K562 (cell line): ENCODE measurements at regions of chr15 and their contacts with region 1.

Region 1: GRCh38 chr15:50765195-50765973 is at the start of gene SPPL2A:
- DNase-seq: peak; percentile 94 to 97 (median 96)
- ATAC-seq: peak; percentile 96
- H3K4me3 ChIP-seq: peak within 1 kb of the TSS; percentile 81
- H3K27ac ChIP-seq: peak within 1 kb of the TSS; percentile 93
- H3K4me1 ChIP-seq: peaks cover 8 to 14% of the 10 kb centered on the region in 2 experiments; a peak in 4 of 5 replicates
- H3K27me3 ChIP-seq: no peaks in the 10 kb centered on the region
- CTCF ChIP-seq: no peak
- EP300 ChIP-seq: peak; percentile 39; the same call in 1 of the 2 replicates
- POLR2A ChIP-seq: peak; percentile 94
- RAD21 ChIP-seq: 0 out of 4 replicates have a peak, but pooled peaks of 1 of the 2 experiments have one; percentile 8
- polyA plus RNA-seq, gene SPPL2A: 9.8 to 14.7 TPM

Region 2: GRCh38 chr15:50686468-50687301 is 78.7 kb before region 1 on chr15 and contains the start of gene TRPM7:
- CTCF ChIA-PET with region 1: no interaction called
- POLR2A ChIA-PET with region 1: interaction called, 3 read pairs
- in situ Hi-C with region 1: no loop called
- intact Hi-C with region 1: loop called (anchors 2 kb)
- DNase-seq: peak; percentile 88 to 95 (median 90)
- ATAC-seq: peak; percentile 87
- H3K4me3 ChIP-seq: peak within 1 kb of the TSS; percentile 82
- H3K27ac ChIP-seq: peak within 1 kb of the TSS; percentile 97
- H3K4me1 ChIP-seq: peaks cover 6 to 26% of the 10 kb centered on the region in 2 experiments; a peak in 4 of 5 replicates
- H3K27me3 ChIP-seq: no peaks in the 10 kb centered on the region
- CTCF ChIP-seq: peak in 1 of 3 experiments; percentile 25; a peak in 1 of 6 replicates
- EP300 ChIP-seq: no peak
- POLR2A ChIP-seq: peak; percentile 88
- RAD21 ChIP-seq: no peak
- polyA plus RNA-seq, gene TRPM7: 12.3 to 12.9 TPM

Region 3: GRCh38 chr15:50753463-50753862 is 11.9 kb before region 1 on chr15:
- CTCF ChIA-PET with region 1: no interaction called
- POLR2A ChIA-PET with region 1: interaction called, 18 read pairs
- in situ Hi-C with region 1: no loop called
- intact Hi-C with region 1: no loop called
- DNase-seq: peak in 2 of 4 experiments; percentile 35 to 50
- ATAC-seq: peak; percentile 86
- H3K4me3 ChIP-seq: no peak overlapping the region
- H3K27ac ChIP-seq: peak overlapping the region; percentile 32; the same call in 1 of the 3 replicates
- H3K4me1 ChIP-seq: peaks cover 0 to 14% of the 10 kb centered on the region in 2 experiments; a peak in 2 of 5 replicates
- H3K27me3 ChIP-seq: no peaks in the 10 kb centered on the region
- CTCF ChIP-seq: no peak
- EP300 ChIP-seq: peak; percentile 69; the same call in 1 of the 2 replicates
- POLR2A ChIP-seq: no peak
- RAD21 ChIP-seq: no peak